CD4-positive, alpha-beta memory T cell (primary cell): ENCODE measurements at regions of chr3 and their contacts with region 1.

Region 1: DNA sequence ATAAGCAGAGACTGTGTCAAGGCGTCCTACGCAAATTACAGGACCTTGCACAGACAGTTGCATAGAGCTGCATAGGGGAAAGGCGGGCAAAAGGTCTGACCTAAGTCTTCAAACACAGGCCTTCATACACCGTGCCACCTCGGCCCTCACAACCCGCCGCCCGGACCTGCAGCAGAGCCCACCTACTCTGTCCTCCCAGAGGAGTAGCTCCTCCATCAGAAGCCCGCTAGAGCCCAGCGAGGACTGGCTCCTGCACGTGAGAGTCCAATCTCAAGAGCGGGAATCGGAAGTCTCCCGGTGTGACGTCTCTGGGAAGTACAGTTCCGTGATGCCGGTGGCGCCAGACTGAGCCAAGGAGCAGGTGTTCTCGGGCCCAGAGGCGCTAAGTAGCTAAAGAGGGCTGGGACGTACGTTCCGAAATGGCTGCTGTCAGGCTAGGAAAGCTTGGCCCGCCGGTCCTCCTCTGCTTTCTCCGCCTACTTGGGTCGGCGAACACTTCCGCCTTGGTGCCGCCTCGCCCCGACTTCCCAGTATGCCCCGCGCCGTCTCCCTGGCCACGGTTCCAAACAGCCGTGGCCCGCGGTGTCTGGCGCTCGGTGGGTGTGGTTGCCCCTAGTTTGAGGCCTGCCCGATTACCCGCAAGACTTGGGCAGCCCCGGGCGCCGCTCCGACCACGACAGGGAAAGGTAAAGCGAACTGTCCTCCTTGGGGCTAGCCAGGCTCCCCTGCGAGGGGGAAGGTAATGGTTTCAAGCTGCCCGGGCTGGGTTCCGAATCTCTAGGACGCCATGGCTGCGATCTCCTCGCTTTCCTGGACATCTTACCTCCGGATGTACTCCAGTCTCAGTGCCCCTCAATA is at the starts of genes ASTE1 and NEK11:
- DNase-seq: peak; percentile 93 to 95 (median 94)
- H3K4me3 ChIP-seq: peak within 1 kb of the TSS; percentile 76 to 95
- H3K4me3 Mint-ChIP-seq: peak within 1 kb of the TSS; percentile 87 to 95 (median 94)
- H3K27ac ChIP-seq: peak within 1 kb of the TSS; percentile 90
- H3K27ac Mint-ChIP-seq: peak within 1 kb of the TSS; percentile 92 to 99 (median 98)
- H3K4me1 ChIP-seq: peaks cover 51% of the 10 kb centered on the region
- H3K4me1 Mint-ChIP-seq: peaks cover 39 to 60% (median 49%) of the 10 kb centered on the region in 4 donors
- H3K27me3 ChIP-seq: no peaks in the 10 kb centered on the region
- H3K27me3 Mint-ChIP-seq: no peaks in the 10 kb centered on the region
- total RNA-seq, gene ASTE1: 28.1 TPM
- total RNA-seq, gene NEK11: 5.3 to 6.2 TPM

Region 2: GRCh38 chr3:129893581-129894070 is 1132.9 kb before region 1 on chr3 and contains the start of gene TMCC1:
- CTCF ChIA-PET with region 1: no interaction called
- POLR2A ChIA-PET with region 1: no interaction called
- intact Hi-C with region 1: loop called (anchors 10 kb)
- DNase-seq: peak; percentile 90 to 94 (median 92)
- H3K4me3 ChIP-seq: peak within 1 kb of the TSS; percentile 87 to 96
- H3K4me3 Mint-ChIP-seq: peak within 1 kb of the TSS; percentile 88 to 96 (median 92)
- H3K27ac ChIP-seq: peak within 1 kb of the TSS; percentile 82
- H3K27ac Mint-ChIP-seq: peak within 1 kb of the TSS; percentile 92 to 97 (median 93)
- H3K4me1 ChIP-seq: peaks cover 46% of the 10 kb centered on the region
- H3K4me1 Mint-ChIP-seq: peaks cover 23 to 47% (median 37%) of the 10 kb centered on the region in 4 donors
- H3K27me3 ChIP-seq: no peaks in the 10 kb centered on the region
- H3K27me3 Mint-ChIP-seq: peaks cover 0 to 1% of the 10 kb centered on the region in 2 donors
- total RNA-seq, gene TMCC1: 36.4 to 39.3 TPM

Region 3: GRCh38 chr3:130746246-130747039 is 280.1 kb before region 1 on chr3 and contains the start of gene PIK3R4:
- CTCF ChIA-PET with region 1: no interaction called
- POLR2A ChIA-PET with region 1: interaction called, 5 read pairs
- intact Hi-C with region 1: loop called (anchors 2 kb)
- DNase-seq: peak; percentile 93 to 99 (median 95)
- H3K4me3 ChIP-seq: peak within 1 kb of the TSS; percentile 99 to 100
- H3K4me3 Mint-ChIP-seq: peak within 1 kb of the TSS; percentile 90 to 95 (median 92)
- H3K27ac ChIP-seq: peak within 1 kb of the TSS; percentile 91
- H3K27ac Mint-ChIP-seq: peak within 1 kb of the TSS in 6 of 7 donors; percentile 97 to 99 (median 98)
- H3K4me1 ChIP-seq: peaks cover 47% of the 10 kb centered on the region
- H3K4me1 Mint-ChIP-seq: peaks cover 33 to 59% (median 49%) of the 10 kb centered on the region in 4 donors
- H3K27me3 ChIP-seq: no peaks in the 10 kb centered on the region
- H3K27me3 Mint-ChIP-seq: peaks cover 0 to 3% of the 10 kb centered on the region in 2 donors
- total RNA-seq, gene PIK3R4: 29.1 to 33.2 TPM

Region 4: GRCh38 chr3:130963878-130964277 is 62.7 kb before region 1 on chr3:
- CTCF ChIA-PET with region 1: no interaction called
- POLR2A ChIA-PET with region 1: no interaction called
- intact Hi-C with region 1: no loop called
- DNase-seq: no peak
- H3K4me3 ChIP-seq: no peak overlapping the region
- H3K4me3 Mint-ChIP-seq: no peak overlapping the region
- H3K27ac ChIP-seq: no peak overlapping the region
- H3K27ac Mint-ChIP-seq: no peak overlapping the region
- H3K4me1 ChIP-seq: no peaks in the 10 kb centered on the region
- H3K4me1 Mint-ChIP-seq: no peaks in the 10 kb centered on the region
- H3K27me3 ChIP-seq: no peaks in the 10 kb centered on the region
- H3K27me3 Mint-ChIP-seq: no peaks in the 10 kb centered on the region

Region 5: GRCh38 chr3:131047582-131047981 is 21.0 kb after region 1 on chr3:
- CTCF ChIA-PET with region 1: interaction called, 25 read pairs
- POLR2A ChIA-PET with region 1: interaction called, 64 read pairs
- intact Hi-C with region 1: loop called (anchors 1 kb)
- DNase-seq: no peak
- H3K4me3 ChIP-seq: no peak overlapping the region
- H3K4me3 Mint-ChIP-seq: no peak overlapping the region
- H3K27ac ChIP-seq: no peak overlapping the region
- H3K27ac Mint-ChIP-seq: peak overlapping the region in 1 of 7 donors; percentile 35
- H3K4me1 ChIP-seq: peaks cover 11% of the 10 kb centered on the region
- H3K4me1 Mint-ChIP-seq: peaks cover 9 to 28% (median 18%) of the 10 kb centered on the region in 4 donors
- H3K27me3 ChIP-seq: no peaks in the 10 kb centered on the region
- H3K27me3 Mint-ChIP-seq: no peaks in the 10 kb centered on the region

Region 6: DNA sequence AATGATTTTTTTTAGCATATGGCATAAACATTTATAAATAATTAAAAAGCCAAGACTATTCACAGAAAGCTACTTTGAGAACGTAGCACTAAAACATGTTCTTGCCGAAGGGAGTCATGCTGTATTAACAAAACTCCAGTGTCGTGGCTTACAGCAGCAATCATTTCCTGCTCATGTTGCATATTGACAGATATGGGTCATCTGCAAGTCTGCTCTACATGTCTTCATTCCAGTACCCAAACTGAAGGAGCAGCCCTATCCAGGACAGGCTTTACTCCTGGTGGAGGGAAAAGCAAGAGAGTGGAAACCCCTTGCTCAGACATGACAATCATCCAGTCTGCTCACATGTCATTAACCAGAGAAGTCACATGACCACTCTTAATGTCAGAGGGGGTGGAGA is 87.7 kb after region 1 on chr3:
- CTCF ChIA-PET with region 1: no interaction called
- POLR2A ChIA-PET with region 1: no interaction called
- intact Hi-C with region 1: no loop called
- DNase-seq: no peak
- H3K4me3 ChIP-seq: no peak overlapping the region
- H3K4me3 Mint-ChIP-seq: no peak overlapping the region
- H3K27ac ChIP-seq: no peak overlapping the region
- H3K27ac Mint-ChIP-seq: no peak overlapping the region
- H3K4me1 ChIP-seq: no peaks in the 10 kb centered on the region
- H3K4me1 Mint-ChIP-seq: no peaks in the 10 kb centered on the region
- H3K27me3 ChIP-seq: no peaks in the 10 kb centered on the region
- H3K27me3 Mint-ChIP-seq: no peaks in the 10 kb centered on the region

Region 7: DNA sequence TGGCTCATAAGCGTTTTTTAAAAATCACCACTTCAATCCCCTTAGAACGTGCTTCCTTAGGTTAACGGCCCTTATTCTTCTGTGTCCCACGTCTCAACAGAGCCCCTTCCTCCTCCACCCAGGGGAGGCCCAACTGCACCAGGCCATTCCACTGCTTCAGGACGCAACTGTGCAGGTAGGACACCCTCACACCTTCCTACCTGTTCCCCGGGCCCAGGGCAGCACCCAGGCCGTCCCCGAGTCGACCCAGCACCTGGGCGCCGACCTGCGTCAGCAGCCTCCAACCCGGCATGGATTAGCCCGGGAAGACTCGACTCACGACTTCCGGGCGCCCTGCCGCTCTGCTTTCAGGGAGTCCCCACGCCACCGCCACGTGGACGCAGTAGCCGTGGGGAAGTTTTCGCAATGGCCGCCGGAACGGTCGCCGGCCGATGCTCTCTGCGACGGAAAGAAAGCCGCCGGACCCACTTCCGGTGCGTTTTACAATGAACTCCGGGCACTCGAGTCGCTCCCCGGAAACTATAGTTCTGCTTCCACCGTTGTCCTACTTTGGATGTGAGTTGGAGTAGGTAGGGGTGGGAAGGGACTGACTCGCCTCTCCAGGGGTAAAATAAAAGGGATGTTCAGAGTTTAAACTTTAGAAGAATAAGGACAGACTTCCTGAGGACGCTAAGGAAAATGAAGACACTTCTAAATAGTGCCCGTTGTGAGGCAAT is 476.1 kb after region 1 on chr3 and contains the start of gene MRPL3:
- CTCF ChIA-PET with region 1: no interaction called
- POLR2A ChIA-PET with region 1: interaction called, 5 read pairs
- intact Hi-C with region 1: loop called (anchors 2 kb)
- DNase-seq: peak; percentile 79 to 85 (median 81)
- H3K4me3 ChIP-seq: peak within 1 kb of the TSS; percentile 74 to 98
- H3K4me3 Mint-ChIP-seq: peak within 1 kb of the TSS; percentile 91 to 100 (median 98)
- H3K27ac ChIP-seq: peak within 1 kb of the TSS; percentile 75
- H3K27ac Mint-ChIP-seq: peak within 1 kb of the TSS; percentile 92 to 97 (median 95)
- H3K4me1 ChIP-seq: peaks cover 27% of the 10 kb centered on the region
- H3K4me1 Mint-ChIP-seq: peaks cover 25 to 47% (median 38%) of the 10 kb centered on the region in 4 donors
- H3K27me3 ChIP-seq: no peaks in the 10 kb centered on the region
- H3K27me3 Mint-ChIP-seq: no peaks in the 10 kb centered on the region
- total RNA-seq, gene MRPL3: 45.8 to 48.1 TPM

Region 8: GRCh38 chr3:132659365-132660051 is 1633.0 kb after region 1 on chr3 and contains the start of gene ACAD11:
- CTCF ChIA-PET with region 1: no interaction called
- POLR2A ChIA-PET with region 1: no interaction called
- intact Hi-C with region 1: loop called (anchors 10 kb)
- DNase-seq: peak; percentile 11 to 48 (median 13)
- H3K4me3 ChIP-seq: peak within 1 kb of the TSS; percentile 78 to 99
- H3K4me3 Mint-ChIP-seq: peak within 1 kb of the TSS; percentile 96 to 99 (median 98)
- H3K27ac ChIP-seq: peak within 1 kb of the TSS; percentile 83
- H3K27ac Mint-ChIP-seq: peak within 1 kb of the TSS; percentile 95 to 98 (median 97)
- H3K4me1 ChIP-seq: peaks cover 53% of the 10 kb centered on the region
- H3K4me1 Mint-ChIP-seq: peaks cover 37 to 71% (median 48%) of the 10 kb centered on the region in 4 donors
- H3K27me3 ChIP-seq: no peaks in the 10 kb centered on the region
- H3K27me3 Mint-ChIP-seq: no peaks in the 10 kb centered on the region
- total RNA-seq, gene ACAD11: 21.6 to 26.9 TPM